Natural killer cell (primary cell): ENCODE measurements at regions of chr3 and their contacts with region 1.

Region 1: GRCh38 chr3:53195602-53196574 is 34.9 kb downstream of the PRKCD start:
- DNase-seq: peak; percentile 64 to 81
- ATAC-seq: peak; percentile 65 to 76 (median 66)
- H3K4me3 ChIP-seq: no peak overlapping the region
- H3K4me3 Mint-ChIP-seq: no peak overlapping the region
- H3K27ac ChIP-seq: no peak overlapping the region
- H3K27ac Mint-ChIP-seq: no peak overlapping the region
- H3K4me1 ChIP-seq: peaks cover 25% of the 10 kb centered on the region
- H3K4me1 Mint-ChIP-seq: peaks cover 15 to 23% of the 10 kb centered on the region in 2 donors
- H3K27me3 ChIP-seq: no peaks in the 10 kb centered on the region
- H3K27me3 Mint-ChIP-seq: peaks cover 0 to 3% of the 10 kb centered on the region in 2 donors
- CTCF ChIP-seq: peak; percentile 99

Region 2: DNA sequence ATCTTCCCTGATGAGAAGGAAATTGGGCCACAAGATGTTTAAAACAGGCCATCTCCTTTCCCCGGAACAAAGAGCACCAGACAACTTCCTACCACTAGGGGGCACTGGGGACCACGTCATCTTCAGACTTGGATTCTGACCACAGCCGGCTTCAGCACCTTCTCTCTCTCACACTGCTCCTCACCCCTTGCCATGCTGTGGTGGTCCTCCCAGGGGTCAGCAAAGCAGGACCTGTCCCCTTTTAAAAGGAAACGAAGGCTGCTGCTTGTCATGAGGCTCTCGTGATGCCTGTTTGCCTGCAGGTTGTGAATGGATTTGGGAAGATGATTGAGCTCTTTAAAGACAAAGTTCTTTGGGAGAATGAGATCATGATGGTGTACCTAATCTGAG is 81.9 kb before region 1 on chr3:
- intact Hi-C with region 1: loop called (anchors 1 kb)
- DNase-seq: peak; percentile 69 to 92
- ATAC-seq: peak; percentile 88 to 99 (median 95)
- H3K4me3 ChIP-seq: no peak overlapping the region
- H3K4me3 Mint-ChIP-seq: no peak overlapping the region
- H3K27ac ChIP-seq: no peak overlapping the region
- H3K27ac Mint-ChIP-seq: no peak overlapping the region
- H3K4me1 ChIP-seq: peaks cover 10% of the 10 kb centered on the region
- H3K4me1 Mint-ChIP-seq: no peaks in the 10 kb centered on the region
- H3K27me3 ChIP-seq: no peaks in the 10 kb centered on the region
- H3K27me3 Mint-ChIP-seq: no peaks in the 10 kb centered on the region
- CTCF ChIP-seq: peak; percentile 81

Region 3: DNA sequence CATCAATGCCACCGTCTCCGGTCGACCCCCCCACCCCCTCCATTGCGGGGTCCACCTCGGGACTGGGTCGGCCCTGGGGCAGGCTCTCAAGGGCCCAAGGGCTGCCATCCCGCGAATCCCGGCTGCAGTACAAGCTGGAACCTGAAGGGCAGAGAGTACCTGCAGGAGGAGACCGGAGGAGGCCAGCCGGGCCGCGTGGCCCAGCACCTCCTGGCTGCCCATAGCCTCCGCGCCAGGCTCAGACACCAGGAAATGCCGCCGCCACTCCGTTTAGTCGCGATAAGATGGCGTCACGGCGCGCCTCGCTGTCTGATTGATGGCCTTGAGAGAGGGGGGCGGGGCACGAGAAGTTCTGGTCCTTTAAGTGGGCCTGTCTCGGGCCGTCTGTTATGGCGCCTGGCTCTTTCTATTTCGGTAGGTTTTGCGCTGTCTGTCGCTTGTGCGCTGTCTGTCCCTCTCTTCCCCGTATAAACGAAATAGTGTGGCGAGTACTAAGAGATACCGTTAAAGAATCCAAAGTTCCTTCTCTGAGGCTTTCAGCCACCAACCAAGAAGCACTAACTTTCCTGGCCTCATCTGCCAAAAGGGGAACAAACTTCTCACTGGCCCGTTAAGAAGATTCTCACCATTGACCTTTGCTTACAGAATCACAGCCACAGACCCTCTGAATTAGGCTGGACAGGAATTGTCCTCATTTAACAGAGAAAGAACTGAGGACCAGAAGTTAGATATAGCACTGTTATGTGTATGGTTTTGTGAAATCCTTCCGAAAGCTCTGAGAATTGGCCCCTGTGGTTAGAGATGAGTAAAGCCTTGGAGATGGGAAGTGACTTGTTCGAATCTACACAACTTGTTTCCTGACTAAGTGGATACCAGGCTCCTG is 65.5 kb before region 1 on chr3 and contains the start of gene RFT1:
- intact Hi-C with region 1: loop called (anchors 1 kb)
- DNase-seq: peak; percentile 98 to 99
- ATAC-seq: peak; percentile 95 to 98 (median 96)
- H3K4me3 ChIP-seq: peak within 1 kb of the TSS; percentile 74
- H3K4me3 Mint-ChIP-seq: peak within 1 kb of the TSS; percentile 91
- H3K27ac ChIP-seq: peak within 1 kb of the TSS; percentile 89
- H3K27ac Mint-ChIP-seq: peak within 1 kb of the TSS; percentile 94 to 99
- H3K4me1 ChIP-seq: peaks cover 13% of the 10 kb centered on the region
- H3K4me1 Mint-ChIP-seq: peaks cover 25% of the 10 kb centered on the region in 2 donors
- H3K27me3 ChIP-seq: no peaks in the 10 kb centered on the region
- H3K27me3 Mint-ChIP-seq: no peaks in the 10 kb centered on the region
- CTCF ChIP-seq: no peak
- total RNA-seq, gene RFT1: 13.3 to 17.2 (median 14.1) TPM

Region 4: GRCh38 chr3:53140847-53141845 is 54.7 kb before region 1 on chr3:
- intact Hi-C with region 1: no loop called
- DNase-seq: no peak
- ATAC-seq: peak in 1 of 3 donors; percentile 58
- H3K4me3 ChIP-seq: no peak overlapping the region
- H3K4me3 Mint-ChIP-seq: no peak overlapping the region
- H3K27ac ChIP-seq: no peak overlapping the region
- H3K27ac Mint-ChIP-seq: no peak overlapping the region
- H3K4me1 ChIP-seq: peaks cover 6% of the 10 kb centered on the region
- H3K4me1 Mint-ChIP-seq: no peaks in the 10 kb centered on the region
- H3K27me3 ChIP-seq: no peaks in the 10 kb centered on the region
- H3K27me3 Mint-ChIP-seq: no peaks in the 10 kb centered on the region
- CTCF ChIP-seq: no peak

Region 5: DNA sequence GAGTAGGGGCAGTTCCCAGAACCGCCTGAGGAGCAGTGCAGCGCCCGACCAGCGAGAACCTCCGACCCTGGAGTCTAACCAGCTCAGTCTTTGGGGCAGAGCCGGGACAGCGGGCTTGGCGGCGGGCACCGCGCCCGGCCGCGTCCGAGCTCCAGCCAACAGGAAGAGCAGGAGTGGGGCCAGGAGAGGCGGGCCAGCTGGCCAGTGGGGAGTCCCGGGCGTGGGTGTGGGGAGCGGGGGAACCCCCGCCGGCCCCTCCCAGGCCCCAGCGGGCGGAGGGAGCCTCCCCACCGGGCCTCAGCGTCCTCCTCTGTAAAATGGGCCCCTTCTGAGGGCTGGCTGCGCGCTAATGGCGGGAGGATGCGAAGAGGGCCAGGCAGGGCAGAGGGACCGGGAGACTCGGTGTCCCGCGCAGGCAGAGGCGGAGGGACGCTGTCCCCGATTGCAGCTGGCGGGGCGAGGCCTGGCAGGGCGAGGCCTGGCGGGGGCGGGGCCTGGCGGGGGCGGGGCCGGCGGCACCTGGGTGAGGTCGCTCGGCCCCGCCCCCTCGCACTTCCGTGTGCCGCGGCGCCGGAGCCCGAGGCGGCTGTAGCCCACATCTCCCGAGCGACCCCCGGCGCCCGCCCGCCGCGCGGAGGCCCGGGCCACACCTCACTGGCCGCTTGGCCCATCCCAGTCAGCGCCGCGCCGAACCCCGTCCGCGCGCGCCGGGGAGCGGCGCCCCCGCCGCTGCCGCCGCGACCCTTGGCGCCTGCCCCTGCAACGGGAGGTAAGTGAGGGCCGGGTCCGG is 35.0 kb before region 1 on chr3 and contains the start of gene PRKCD:
- intact Hi-C with region 1: loop called (anchors 5 kb)
- DNase-seq: peak; percentile 57 to 91
- ATAC-seq: peak; percentile 41 to 73 (median 60)
- H3K4me3 ChIP-seq: peak within 1 kb of the TSS; percentile 95
- H3K4me3 Mint-ChIP-seq: peak within 1 kb of the TSS; percentile 93
- H3K27ac ChIP-seq: peak within 1 kb of the TSS; percentile 80
- H3K27ac Mint-ChIP-seq: peak within 1 kb of the TSS; percentile 82 to 94
- H3K4me1 ChIP-seq: peaks cover 57% of the 10 kb centered on the region
- H3K4me1 Mint-ChIP-seq: peaks cover 23 to 43% of the 10 kb centered on the region in 2 donors
- H3K27me3 ChIP-seq: peaks cover 8% of the 10 kb centered on the region
- H3K27me3 Mint-ChIP-seq: peaks cover 17 to 18% of the 10 kb centered on the region in 2 donors
- CTCF ChIP-seq: peak; percentile 57
- total RNA-seq, gene PRKCD: 31.7 to 60.0 (median 36.3) TPM